GM12878 (cell line): ENCODE measurements at regions of chr9 and their contacts with region 1.

Region 1: DNA sequence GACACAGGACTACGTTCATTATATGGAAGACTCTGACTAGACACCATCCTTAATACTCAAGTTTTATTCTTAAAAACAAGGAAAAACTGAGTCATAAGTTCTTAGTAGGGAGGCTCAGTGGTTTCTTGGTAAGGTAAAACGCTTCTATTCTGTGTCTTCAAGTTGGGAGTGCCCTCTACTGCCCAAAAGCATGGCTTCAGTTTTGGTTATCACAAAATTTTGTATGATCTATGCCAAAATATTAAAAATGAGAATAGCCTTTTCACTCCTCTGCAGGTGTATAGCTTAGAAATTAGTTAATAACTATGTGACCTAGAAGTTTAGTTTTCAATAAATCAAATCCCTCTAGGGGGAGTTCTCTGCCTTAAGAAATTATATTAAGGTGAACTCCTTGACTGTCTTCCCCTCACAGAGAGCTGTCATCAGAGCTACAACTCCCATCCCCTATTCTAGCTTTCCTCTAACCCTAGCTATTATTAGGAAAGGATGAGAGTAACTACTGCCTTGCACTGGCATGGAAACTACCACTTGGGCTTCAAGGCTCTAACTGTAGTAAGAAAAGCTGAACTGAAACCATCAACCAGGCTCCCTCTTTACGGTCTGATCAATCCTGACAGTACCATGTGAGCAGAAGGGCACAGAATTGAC is 189.7 kb downstream of the GNAQ start:
- DNase-seq: peak; percentile 16
- ATAC-seq: peak; percentile 95
- H3K4me3 ChIP-seq: no peak overlapping the region
- H3K27ac ChIP-seq: no peak overlapping the region
- H3K4me1 ChIP-seq: peaks cover 8% of the 10 kb centered on the region; the same call in 1 of the 2 replicates
- H3K27me3 ChIP-seq: no peaks in the 10 kb centered on the region
- CTCF ChIP-seq: peak; percentile 1 to 16 (median 8); a peak in 2 of 6 replicates
- EP300 ChIP-seq: no peak; a peak in 1 of 4 replicates
- POLR2A ChIP-seq: no peak
- RAD21 ChIP-seq: peak; percentile 48

Region 2: GRCh38 chr9:77456829-77457437 is 384.9 kb before region 1 on chr9:
- CTCF ChIA-PET with region 1: interaction called, 15 read pairs
- POLR2A ChIA-PET with region 1: no interaction called
- RAD21 ChIA-PET with region 1: interaction called, 4 read pairs
- SMC1A ChIA-PET with region 1: interaction called, 5 read pairs
- in situ Hi-C with region 1: no loop called
- intact Hi-C with region 1: no loop called
- DNase-seq: no peak
- ATAC-seq: peak; percentile 91
- H3K4me3 ChIP-seq: no peak overlapping the region
- H3K27ac ChIP-seq: no peak overlapping the region
- H3K4me1 ChIP-seq: no peaks in the 10 kb centered on the region
- H3K27me3 ChIP-seq: no peaks in the 10 kb centered on the region; a peak in 2 of 4 replicates
- CTCF ChIP-seq: peak; percentile 79 to 94 (median 90)
- EP300 ChIP-seq: no peak
- POLR2A ChIP-seq: no peak
- RAD21 ChIP-seq: peak; percentile 47

Region 3: GRCh38 chr9:77764894-77765780 is 76.7 kb before region 1 on chr9:
- CTCF ChIA-PET with region 1: interaction called, 10 read pairs
- POLR2A ChIA-PET with region 1: no interaction called
- RAD21 ChIA-PET with region 1: interaction called, 7 read pairs
- SMC1A ChIA-PET with region 1: interaction called, 4 read pairs
- in situ Hi-C with region 1: no loop called
- intact Hi-C with region 1: no loop called
- DNase-seq: no peak
- ATAC-seq: peak; percentile 70
- H3K4me3 ChIP-seq: no peak overlapping the region
- H3K27ac ChIP-seq: no peak overlapping the region
- H3K4me1 ChIP-seq: no peaks in the 10 kb centered on the region
- H3K27me3 ChIP-seq: no peaks in the 10 kb centered on the region
- CTCF ChIP-seq: peak; percentile 28 to 47 (median 43); a peak in 4 of 6 replicates
- EP300 ChIP-seq: no peak
- POLR2A ChIP-seq: no peak
- RAD21 ChIP-seq: peak; percentile 30; the same call in 1 of the 2 replicates

Region 4: GRCh38 chr9:77827104-77827784 is 14.6 kb before region 1 on chr9:
- CTCF ChIA-PET with region 1: interaction called, 13 read pairs
- POLR2A ChIA-PET with region 1: interaction called, 6 read pairs
- RAD21 ChIA-PET with region 1: interaction called, 44 read pairs
- SMC1A ChIA-PET with region 1: interaction called, 19 read pairs
- in situ Hi-C with region 1: no loop called
- intact Hi-C with region 1: no loop called
- DNase-seq: peak; percentile 21
- ATAC-seq: peak; percentile 81
- H3K4me3 ChIP-seq: no peak overlapping the region
- H3K27ac ChIP-seq: no peak overlapping the region
- H3K4me1 ChIP-seq: peaks cover 3% of the 10 kb centered on the region; the same call in 1 of the 2 replicates
- H3K27me3 ChIP-seq: no peaks in the 10 kb centered on the region; a peak in 1 of 4 replicates
- CTCF ChIP-seq: no peak
- EP300 ChIP-seq: no peak
- POLR2A ChIP-seq: no peak
- RAD21 ChIP-seq: no peak

Region 5: DNA sequence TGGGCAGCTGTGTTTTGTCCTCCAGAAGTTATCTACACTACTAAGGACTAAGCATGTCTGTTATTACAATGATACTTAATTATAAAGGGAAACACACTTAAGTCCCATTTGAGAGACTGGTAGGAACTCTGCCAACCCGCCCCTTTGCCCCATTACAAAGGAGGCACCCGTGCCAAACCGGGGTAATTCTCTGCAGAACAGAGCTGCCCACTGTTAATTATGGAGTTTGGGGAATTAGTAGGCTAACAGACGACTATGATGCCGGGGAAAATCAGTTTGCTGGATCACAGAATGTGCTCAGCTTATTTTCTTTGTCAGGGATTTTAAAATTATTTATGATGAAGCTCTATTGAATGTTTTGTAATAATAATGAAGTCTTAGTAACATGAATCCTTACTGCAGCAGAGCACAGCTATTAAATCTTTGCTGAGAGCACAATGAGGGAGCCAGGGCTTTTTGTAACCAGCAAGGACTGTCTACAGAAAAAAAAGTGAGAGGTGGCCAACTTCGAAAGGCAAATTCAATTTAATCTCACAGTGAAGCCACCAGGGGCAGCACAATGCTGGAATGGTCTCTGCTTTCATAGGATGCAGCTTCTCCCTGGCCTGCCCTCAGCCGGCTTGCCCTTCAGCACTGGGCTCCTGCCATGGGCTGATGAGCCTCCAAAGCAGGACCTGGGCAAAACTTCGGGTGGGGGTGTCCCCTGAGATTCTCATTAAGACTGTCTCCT is 55.2 kb after region 1 on chr9:
- CTCF ChIA-PET with region 1: interaction called, 5 read pairs
- POLR2A ChIA-PET with region 1: no interaction called
- RAD21 ChIA-PET with region 1: interaction called, 9 read pairs
- SMC1A ChIA-PET with region 1: interaction called, 11 read pairs
- in situ Hi-C with region 1: no loop called
- intact Hi-C with region 1: no loop called
- DNase-seq: no peak
- ATAC-seq: peak; percentile 36
- H3K4me3 ChIP-seq: no peak overlapping the region
- H3K27ac ChIP-seq: no peak overlapping the region
- H3K4me1 ChIP-seq: no peaks in the 10 kb centered on the region
- H3K27me3 ChIP-seq: no peaks in the 10 kb centered on the region
- CTCF ChIP-seq: peak in 2 of 3 experiments; percentile 6 to 7; a peak in 1 of 6 replicates
- EP300 ChIP-seq: no peak
- POLR2A ChIP-seq: no peak
- RAD21 ChIP-seq: no peak

Region 6: GRCh38 chr9:78023003-78023741 is 181.3 kb after region 1 on chr9:
- CTCF ChIA-PET with region 1: no interaction called
- POLR2A ChIA-PET with region 1: no interaction called
- RAD21 ChIA-PET with region 1: no interaction called
- SMC1A ChIA-PET with region 1: no interaction called
- in situ Hi-C with region 1: no loop called
- intact Hi-C with region 1: no loop called
- DNase-seq: no peak
- ATAC-seq: peak; percentile 54
- H3K4me3 ChIP-seq: no peak overlapping the region
- H3K27ac ChIP-seq: no peak overlapping the region
- H3K4me1 ChIP-seq: no peaks in the 10 kb centered on the region
- H3K27me3 ChIP-seq: no peaks in the 10 kb centered on the region; a peak in 2 of 4 replicates
- CTCF ChIP-seq: no peak
- EP300 ChIP-seq: 0 out of 4 replicates have a peak, but pooled peaks of 1 of the 2 experiments have one; percentile 11
- POLR2A ChIP-seq: no peak
- RAD21 ChIP-seq: no peak